ENCODE measurements at regions of chr10 and their contacts with region 1.

Region 1: DNA sequence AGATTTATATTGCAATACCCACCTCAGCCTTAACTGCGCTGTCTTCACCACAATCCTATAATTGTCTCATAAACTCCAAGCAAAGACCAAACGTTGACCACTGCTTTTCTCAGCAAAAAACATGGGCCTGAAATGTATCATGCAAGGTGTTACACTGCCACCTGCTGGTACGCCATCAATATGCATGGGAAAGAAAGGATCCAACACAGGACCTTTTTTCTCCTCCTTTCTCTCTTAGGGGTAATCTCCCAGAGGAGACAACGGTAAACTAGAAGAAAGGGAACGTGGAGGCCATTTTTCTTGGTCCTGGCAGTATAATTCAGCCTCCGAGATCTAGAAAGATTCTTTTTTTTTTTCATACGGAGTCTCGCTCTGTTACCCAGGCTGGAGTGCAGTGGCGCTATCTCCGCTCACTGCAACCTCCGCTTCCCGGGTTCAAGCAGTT is 79.1 kb upstream of the MPP7 start:
- DNase-seq: peak; percentile 67 to 91 (median 88)
- ATAC-seq: peak; percentile 97
- H3K4me3 ChIP-seq: no peak overlapping the region
- H3K4me3 Mint-ChIP-seq: no peak overlapping the region
- H3K27ac ChIP-seq: no peak overlapping the region
- H3K27ac Mint-ChIP-seq: peak overlapping the region; percentile 58
- H3K4me1 ChIP-seq: peaks cover 25% of the 10 kb centered on the region
- H3K4me1 Mint-ChIP-seq: peaks cover 27% of the 10 kb centered on the region
- H3K27me3 ChIP-seq: no peaks in the 10 kb centered on the region
- H3K27me3 Mint-ChIP-seq: peaks cover 2% of the 10 kb centered on the region
- CTCF ChIP-seq: peak; percentile 96

Region 2: DNA sequence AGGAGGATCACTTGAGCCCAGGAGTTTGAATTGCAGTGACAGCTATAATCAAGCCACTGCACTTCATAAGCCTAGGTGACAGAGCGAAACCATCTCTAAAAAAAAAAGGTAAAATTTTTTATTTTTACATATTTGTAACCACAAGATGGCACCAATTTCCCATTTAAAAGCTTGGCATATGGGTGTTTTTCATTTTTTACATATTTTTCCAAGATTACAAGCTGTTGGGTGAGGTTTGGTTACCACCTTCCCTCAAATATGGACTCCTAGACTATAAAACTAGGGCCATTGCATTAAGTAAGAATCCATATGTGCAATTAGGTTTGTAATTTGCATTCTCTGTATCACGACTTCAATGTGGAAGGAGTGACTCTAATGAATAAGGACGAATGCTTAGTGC is 1012.0 kb before region 1 on chr10:
- CTCF ChIA-PET with region 1: interaction called, 3 read pairs
- POLR2A ChIA-PET with region 1: no interaction called
- intact Hi-C with region 1: loop called in 1 of 2 experiments (anchors 5 kb)
- DNase-seq: peak in 1 of 9 experiments; percentile 10
- ATAC-seq: no peak
- H3K4me3 ChIP-seq: no peak overlapping the region
- H3K4me3 Mint-ChIP-seq: no peak overlapping the region
- H3K27ac ChIP-seq: no peak overlapping the region
- H3K27ac Mint-ChIP-seq: no peak overlapping the region
- H3K4me1 ChIP-seq: no peaks in the 10 kb centered on the region
- H3K4me1 Mint-ChIP-seq: no peaks in the 10 kb centered on the region
- H3K27me3 ChIP-seq: no peaks in the 10 kb centered on the region
- H3K27me3 Mint-ChIP-seq: peaks cover 6% of the 10 kb centered on the region
- CTCF ChIP-seq: no peak

Region 3: DNA sequence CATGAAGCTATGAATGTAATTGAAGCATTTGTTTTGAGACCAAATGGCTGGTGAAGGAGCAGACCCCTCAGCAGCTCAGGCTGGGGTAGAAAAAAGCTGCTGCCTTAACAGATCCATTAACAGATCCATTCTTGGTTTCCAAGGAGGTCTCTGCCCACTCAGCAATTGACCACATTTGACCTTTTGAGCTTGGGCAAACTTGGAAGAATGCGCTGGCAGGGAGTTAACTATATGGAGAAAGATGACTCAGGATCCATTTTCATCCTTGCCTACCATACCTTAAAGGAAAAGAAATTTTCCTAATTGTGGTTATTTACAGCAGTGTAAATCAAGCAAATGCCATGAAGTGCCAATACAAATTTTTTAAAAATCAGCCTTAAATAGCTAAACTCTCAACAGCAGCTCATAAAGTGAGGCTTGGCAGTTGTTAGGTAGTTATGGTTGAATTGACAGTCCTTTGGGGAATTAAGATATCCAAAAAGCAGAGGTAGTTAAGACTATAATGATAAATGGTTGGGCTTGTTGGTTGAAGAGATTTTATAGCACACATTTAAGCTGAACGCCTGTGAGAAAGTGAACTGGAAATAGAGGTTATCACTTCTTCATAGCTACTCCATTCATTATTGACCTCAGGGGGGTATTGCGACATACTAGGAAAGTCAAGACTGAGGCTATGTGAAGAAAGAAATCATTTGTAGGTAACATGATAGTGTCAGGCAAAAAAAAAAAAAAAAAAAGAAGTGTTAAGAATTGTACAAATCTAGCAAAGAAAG is 720.2 kb before region 1 on chr10:
- CTCF ChIA-PET with region 1: no interaction called
- POLR2A ChIA-PET with region 1: no interaction called
- intact Hi-C with region 1: loop called in 1 of 2 experiments (anchors 10 kb)
- DNase-seq: no peak
- ATAC-seq: no peak
- H3K4me3 ChIP-seq: no peak overlapping the region
- H3K4me3 Mint-ChIP-seq: no peak overlapping the region
- H3K27ac ChIP-seq: no peak overlapping the region
- H3K27ac Mint-ChIP-seq: no peak overlapping the region
- H3K4me1 ChIP-seq: no peaks in the 10 kb centered on the region
- H3K4me1 Mint-ChIP-seq: no peaks in the 10 kb centered on the region
- H3K27me3 ChIP-seq: peaks cover 0 to 5% of the 10 kb centered on the region in 2 experiments
- H3K27me3 Mint-ChIP-seq: peaks cover 43% of the 10 kb centered on the region
- CTCF ChIP-seq: no peak

Region 4: GRCh38 chr10:28241741-28242399 is 140.1 kb before region 1 on chr10:
- CTCF ChIA-PET with region 1: interaction called, 49 read pairs
- POLR2A ChIA-PET with region 1: no interaction called
- intact Hi-C with region 1: loop called in 1 of 2 experiments (anchors 2 kb)
- DNase-seq: peak in 7 of 9 experiments; percentile 12 to 69 (median 23)
- ATAC-seq: peak; percentile 84
- H3K4me3 ChIP-seq: no peak overlapping the region
- H3K4me3 Mint-ChIP-seq: no peak overlapping the region
- H3K27ac ChIP-seq: no peak overlapping the region
- H3K27ac Mint-ChIP-seq: no peak overlapping the region
- H3K4me1 ChIP-seq: peaks cover 15% of the 10 kb centered on the region
- H3K4me1 Mint-ChIP-seq: peaks cover 38% of the 10 kb centered on the region
- H3K27me3 ChIP-seq: no peaks in the 10 kb centered on the region
- H3K27me3 Mint-ChIP-seq: no peaks in the 10 kb centered on the region
- CTCF ChIP-seq: peak; percentile 91

Region 5: GRCh38 chr10:28302638-28303488 is 79.1 kb before region 1 on chr10 and contains the start of gene MPP7:
- CTCF ChIA-PET with region 1: interaction called, 244 read pairs
- POLR2A ChIA-PET with region 1: interaction called, 36 read pairs
- intact Hi-C with region 1: loop called (anchors 1 kb)
- DNase-seq: peak; percentile 94 to 98 (median 96)
- ATAC-seq: peak; percentile 89
- H3K4me3 ChIP-seq: peak within 1 kb of the TSS; percentile 67 to 87
- H3K4me3 Mint-ChIP-seq: peak within 1 kb of the TSS; percentile 97
- H3K27ac ChIP-seq: peak within 1 kb of the TSS; percentile 52 to 71
- H3K27ac Mint-ChIP-seq: peak within 1 kb of the TSS; percentile 95
- H3K4me1 ChIP-seq: peaks cover 44% of the 10 kb centered on the region
- H3K4me1 Mint-ChIP-seq: peaks cover 65% of the 10 kb centered on the region
- H3K27me3 ChIP-seq: no peaks in the 10 kb centered on the region
- H3K27me3 Mint-ChIP-seq: no peaks in the 10 kb centered on the region
- CTCF ChIP-seq: peak; percentile 61
- total RNA-seq, gene MPP7: 22.5 to 23.1 TPM

Region 6: GRCh38 chr10:28326516-28327490 is 55.1 kb before region 1 on chr10:
- CTCF ChIA-PET with region 1: interaction called, 96 read pairs
- POLR2A ChIA-PET with region 1: interaction called, 27 read pairs
- intact Hi-C with region 1: no loop called
- DNase-seq: no peak
- ATAC-seq: no peak
- H3K4me3 ChIP-seq: peak overlapping the region in 1 of 2 experiments; percentile 3
- H3K4me3 Mint-ChIP-seq: peak overlapping the region; percentile 44
- H3K27ac ChIP-seq: no peak overlapping the region
- H3K27ac Mint-ChIP-seq: peak overlapping the region; percentile 66
- H3K4me1 ChIP-seq: peaks cover 44% of the 10 kb centered on the region
- H3K4me1 Mint-ChIP-seq: peaks cover 66% of the 10 kb centered on the region
- H3K27me3 ChIP-seq: no peaks in the 10 kb centered on the region
- H3K27me3 Mint-ChIP-seq: no peaks in the 10 kb centered on the region
- CTCF ChIP-seq: no peak

Region 7: DNA sequence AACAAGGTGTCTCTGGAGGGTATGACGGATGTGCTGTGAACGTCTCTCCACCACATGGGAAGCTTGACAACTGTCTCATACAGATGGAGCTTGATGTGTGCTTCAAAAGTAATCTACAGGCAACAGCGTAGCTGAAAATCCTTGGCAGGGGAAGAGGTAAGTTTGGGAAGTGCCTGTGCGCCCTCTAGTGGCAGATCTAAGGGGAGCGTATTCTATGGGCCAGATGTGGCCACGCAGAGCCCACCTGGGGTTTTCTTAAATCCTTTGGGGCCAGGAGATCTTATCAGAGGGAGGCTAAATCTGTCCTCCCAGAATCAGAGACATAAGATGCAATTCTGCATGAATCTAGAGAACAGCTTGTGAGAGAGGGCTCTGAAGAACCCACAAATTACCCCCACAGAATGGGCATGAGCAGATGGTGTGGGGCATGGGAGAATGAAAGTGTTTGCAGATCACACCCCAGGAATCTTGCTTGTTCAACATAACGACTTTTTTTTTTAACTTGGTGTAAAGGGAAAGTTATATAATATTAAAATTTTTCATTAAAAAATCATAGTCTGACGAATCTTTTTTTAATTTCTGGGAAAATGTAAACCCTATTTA is 12.1 kb after region 1 on chr10:
- CTCF ChIA-PET with region 1: interaction called, 61 read pairs
- POLR2A ChIA-PET with region 1: no interaction called
- intact Hi-C with region 1: no loop called
- DNase-seq: peak; percentile 26 to 79 (median 63)
- ATAC-seq: peak; percentile 74
- H3K4me3 ChIP-seq: no peak overlapping the region
- H3K4me3 Mint-ChIP-seq: no peak overlapping the region
- H3K27ac ChIP-seq: no peak overlapping the region
- H3K27ac Mint-ChIP-seq: no peak overlapping the region
- H3K4me1 ChIP-seq: no peaks in the 10 kb centered on the region
- H3K4me1 Mint-ChIP-seq: peaks cover 4% of the 10 kb centered on the region
- H3K27me3 ChIP-seq: no peaks in the 10 kb centered on the region
- H3K27me3 Mint-ChIP-seq: peaks cover 15% of the 10 kb centered on the region
- CTCF ChIP-seq: peak; percentile 99

Measured in CD8-positive, alpha-beta T cell (primary cell).